ENCODE measurements at regions of chr5 and their contacts with region 1.

Region 1: DNA sequence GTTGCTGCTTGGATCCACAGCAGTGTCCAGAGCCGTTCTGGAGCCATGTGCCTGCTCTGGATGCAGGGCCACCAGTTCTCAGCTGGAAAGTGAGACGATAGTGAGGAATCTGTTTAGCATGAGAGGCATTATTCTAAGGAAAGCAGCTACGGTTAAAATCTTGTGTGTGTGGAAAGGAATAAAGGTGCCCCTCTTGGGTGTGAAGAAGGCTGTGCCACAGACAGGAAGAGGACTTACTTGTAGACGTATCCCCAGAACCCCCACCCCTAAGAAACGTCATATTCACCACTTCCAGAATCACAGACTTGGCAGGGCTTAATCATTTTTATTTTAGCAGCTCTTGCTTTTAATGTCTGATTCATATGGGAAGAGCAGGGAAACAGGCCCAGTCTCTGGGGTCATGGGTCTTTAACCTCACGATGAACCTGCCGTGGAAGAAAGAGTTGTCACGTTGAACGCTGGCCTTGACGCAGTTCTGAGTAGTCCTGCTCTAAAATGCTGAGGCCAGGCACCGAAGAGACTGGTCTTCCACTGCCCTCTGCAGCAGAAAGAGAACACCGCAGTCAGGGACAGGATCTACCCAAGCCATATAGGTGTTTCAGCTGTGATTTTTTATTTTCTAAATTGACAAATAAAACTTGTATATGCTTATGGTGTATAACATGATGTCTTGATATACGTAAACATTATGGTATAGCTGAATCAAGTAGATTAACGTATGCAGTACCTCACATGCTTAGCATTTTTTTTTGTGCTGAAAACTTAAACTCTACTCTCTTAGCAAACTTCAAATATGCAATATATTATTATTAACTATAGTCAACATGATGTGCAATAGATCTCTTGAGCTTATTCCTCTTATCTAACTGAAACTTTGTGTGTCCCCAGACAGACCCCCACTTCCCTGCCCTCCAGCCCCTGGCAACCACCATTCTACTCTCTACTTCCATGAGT is 38.8 kb downstream of the CARTPT start:
- DNase-seq: peak; percentile 79
- H3K4me3 Mint-ChIP-seq: peak overlapping the region; percentile 22
- H3K27ac Mint-ChIP-seq: no peak overlapping the region
- H3K4me1 Mint-ChIP-seq: no peaks in the 10 kb centered on the region
- H3K27me3 Mint-ChIP-seq: peaks cover 4% of the 10 kb centered on the region

Region 2: GRCh38 chr5:71455427-71456361 is 302.2 kb before region 1 on chr5 and contains the start of gene BDP1:
- intact Hi-C with region 1: loop called (anchors 5 kb)
- DNase-seq: peak; percentile 99
- H3K4me3 Mint-ChIP-seq: peak within 1 kb of the TSS; percentile 97
- H3K27ac Mint-ChIP-seq: peak within 1 kb of the TSS; percentile 99
- H3K4me1 Mint-ChIP-seq: peaks cover 23% of the 10 kb centered on the region
- H3K27me3 Mint-ChIP-seq: peaks cover 2% of the 10 kb centered on the region
- total RNA-seq, gene BDP1: 39.1 and 39.4 TPM in 2 replicates

Region 3: DNA sequence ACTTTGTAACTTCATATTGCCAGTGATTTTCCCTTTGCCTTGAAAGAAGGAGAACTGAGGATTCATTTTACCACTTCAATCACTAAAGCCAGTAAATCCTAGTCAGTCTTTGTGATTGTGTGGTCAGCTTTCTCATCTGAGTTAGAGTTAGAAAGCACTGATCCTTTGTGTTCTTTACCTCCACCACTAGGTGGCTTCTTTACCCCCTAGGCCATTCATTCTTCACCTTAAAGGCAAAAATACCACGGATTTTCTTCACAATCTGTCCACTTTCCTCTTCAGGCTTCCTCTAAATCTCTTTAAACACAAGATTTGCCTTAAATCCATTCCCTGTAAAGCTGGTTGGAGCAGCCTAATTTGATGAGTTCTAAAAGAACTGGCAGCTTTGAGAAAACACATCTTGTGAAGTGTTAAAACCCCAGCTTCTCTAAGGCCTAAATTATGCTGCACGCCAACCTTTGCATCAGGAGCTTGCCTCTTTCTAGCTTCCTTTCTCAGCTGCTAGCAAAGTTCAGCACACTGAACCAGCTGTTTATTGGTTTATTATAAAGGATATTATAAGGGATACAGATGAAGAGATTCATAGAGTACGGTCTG is 282.0 kb before region 1 on chr5:
- intact Hi-C with region 1: loop called (anchors 1 kb)
- DNase-seq: no peak
- H3K4me3 Mint-ChIP-seq: no peak overlapping the region
- H3K27ac Mint-ChIP-seq: no peak overlapping the region
- H3K4me1 Mint-ChIP-seq: no peaks in the 10 kb centered on the region
- H3K27me3 Mint-ChIP-seq: no peaks in the 10 kb centered on the region

Region 4: DNA sequence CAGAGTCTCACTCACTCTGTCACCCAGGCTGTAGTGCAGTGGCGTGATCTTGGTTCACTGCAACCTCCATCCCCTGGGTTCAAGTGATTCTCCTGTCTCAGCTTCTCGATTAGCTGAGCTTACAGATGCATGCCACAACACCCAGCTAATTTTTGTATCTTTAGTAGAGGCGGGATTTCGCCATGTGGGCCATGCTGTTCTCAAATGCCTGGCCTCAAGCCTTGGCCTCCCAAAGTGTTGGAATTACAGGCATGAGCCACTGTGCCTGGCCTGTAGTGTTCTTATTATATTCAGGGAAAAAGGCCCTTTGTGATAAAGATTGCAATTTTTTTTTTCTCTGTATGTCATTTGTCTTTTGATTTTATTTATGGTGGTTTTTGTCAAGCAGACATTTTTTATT is 194.7 kb before region 1 on chr5:
- intact Hi-C with region 1: loop called (anchors 10 kb)
- DNase-seq: peak; percentile 41
- H3K4me3 Mint-ChIP-seq: no peak overlapping the region
- H3K27ac Mint-ChIP-seq: no peak overlapping the region
- H3K4me1 Mint-ChIP-seq: no peaks in the 10 kb centered on the region
- H3K27me3 Mint-ChIP-seq: no peaks in the 10 kb centered on the region

Region 5: DNA sequence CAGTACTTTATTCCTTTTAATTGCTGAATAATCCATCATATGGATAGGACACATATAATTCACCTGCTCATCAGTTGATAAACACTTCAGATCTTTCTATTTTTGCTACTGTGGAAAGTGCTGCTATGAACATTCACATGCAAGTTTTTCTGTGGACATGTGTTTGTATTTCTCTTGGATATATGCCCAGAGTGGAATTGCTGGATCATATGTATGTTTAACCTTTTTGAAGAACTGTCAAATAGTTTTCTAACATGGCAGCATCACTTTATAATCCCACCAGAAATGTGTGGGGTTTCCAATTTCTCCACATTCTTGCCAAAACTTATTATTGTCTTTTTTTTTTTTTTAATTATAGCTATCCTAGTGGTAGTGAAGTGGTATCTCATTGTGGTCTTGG is 23.7 kb before region 1 on chr5:
- intact Hi-C with region 1: no loop called
- DNase-seq: no peak
- H3K4me3 Mint-ChIP-seq: no peak overlapping the region
- H3K27ac Mint-ChIP-seq: no peak overlapping the region
- H3K4me1 Mint-ChIP-seq: no peaks in the 10 kb centered on the region
- H3K27me3 Mint-ChIP-seq: peaks cover 13% of the 10 kb centered on the region

Region 6: GRCh38 chr5:72018146-72018803 is 260.4 kb after region 1 on chr5:
- intact Hi-C with region 1: no loop called
- DNase-seq: peak; percentile 86
- H3K4me3 Mint-ChIP-seq: no peak overlapping the region
- H3K27ac Mint-ChIP-seq: no peak overlapping the region
- H3K4me1 Mint-ChIP-seq: no peaks in the 10 kb centered on the region
- H3K27me3 Mint-ChIP-seq: peaks cover 9% of the 10 kb centered on the region

Measured in activated CD4-positive, alpha-beta T cell treated with anti-CD3 and anti-CD28 coated beads, Interleukin-2, amount 10 ng/mL, durations not matched to agents 24 days and 14 days (primary cell).